CD8-positive, alpha-beta T cell (primary cell): ENCODE measurements at regions of chr10 and their contacts with region 1.

Region 1: DNA sequence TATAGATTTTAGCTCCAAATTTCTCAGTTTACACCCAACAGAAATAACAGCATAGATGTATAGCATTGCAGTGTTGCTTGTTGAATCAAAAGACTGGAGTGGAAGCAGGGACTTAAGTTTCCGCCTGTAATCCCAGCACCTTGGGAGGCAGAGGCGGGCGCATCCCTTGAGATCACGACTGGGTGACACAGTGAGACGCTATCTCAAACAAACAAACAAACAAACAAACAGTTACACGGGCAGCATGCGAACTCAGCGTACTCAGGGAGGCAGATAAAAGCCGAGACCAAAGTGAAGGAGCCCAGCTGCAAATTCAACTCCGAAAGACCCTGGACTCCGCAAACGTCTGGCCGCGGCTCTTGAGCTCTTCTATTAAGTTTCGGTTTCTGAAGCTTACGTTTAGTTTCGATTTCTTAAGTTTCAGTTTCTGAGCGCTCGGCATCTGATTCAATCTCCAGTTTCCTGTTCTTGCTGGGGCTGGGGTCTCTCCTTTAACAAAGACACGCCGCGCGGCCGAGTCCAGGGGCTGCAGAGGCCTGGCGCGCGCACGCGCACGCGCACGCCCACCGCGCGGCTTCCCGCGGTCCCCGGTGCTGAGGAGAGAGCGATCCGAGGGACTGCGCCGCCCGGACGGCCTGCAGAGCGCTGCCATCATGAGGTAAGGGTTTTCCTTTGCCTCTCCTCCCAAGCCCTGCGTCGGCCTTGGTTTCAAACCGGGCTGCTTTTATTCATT is at the start of gene IFIT5:
- DNase-seq: peak; percentile 38 to 86 (median 67)
- ATAC-seq: peak; percentile 78
- H3K4me3 ChIP-seq: peak within 1 kb of the TSS; percentile 70 to 87
- H3K4me3 Mint-ChIP-seq: peak within 1 kb of the TSS; percentile 94
- H3K27ac ChIP-seq: peak within 1 kb of the TSS; percentile 83 to 91
- H3K27ac Mint-ChIP-seq: peak within 1 kb of the TSS; percentile 98
- H3K4me1 ChIP-seq: peaks cover 47% of the 10 kb centered on the region
- H3K4me1 Mint-ChIP-seq: peaks cover 50% of the 10 kb centered on the region
- H3K27me3 ChIP-seq: no peaks in the 10 kb centered on the region
- H3K27me3 Mint-ChIP-seq: no peaks in the 10 kb centered on the region
- CTCF ChIP-seq: no peak
- total RNA-seq, gene IFIT5: 15.0 to 16.1 TPM

Region 2: GRCh38 chr10:88624840-88625239 is 789.5 kb before region 1 on chr10:
- CTCF ChIA-PET with region 1: no interaction called
- POLR2A ChIA-PET with region 1: no interaction called
- intact Hi-C with region 1: no loop called
- DNase-seq: no peak
- ATAC-seq: no peak
- H3K4me3 ChIP-seq: no peak overlapping the region
- H3K4me3 Mint-ChIP-seq: no peak overlapping the region
- H3K27ac ChIP-seq: no peak overlapping the region
- H3K27ac Mint-ChIP-seq: no peak overlapping the region
- H3K4me1 ChIP-seq: no peaks in the 10 kb centered on the region
- H3K4me1 Mint-ChIP-seq: no peaks in the 10 kb centered on the region
- H3K27me3 ChIP-seq: no peaks in the 10 kb centered on the region
- H3K27me3 Mint-ChIP-seq: peaks cover 2% of the 10 kb centered on the region
- CTCF ChIP-seq: no peak

Region 3: GRCh38 chr10:88880282-88881076 is 533.8 kb before region 1 on chr10:
- CTCF ChIA-PET with region 1: no interaction called
- POLR2A ChIA-PET with region 1: no interaction called
- intact Hi-C with region 1: loop called in 1 of 2 experiments (anchors 5 kb)
- DNase-seq: peak; percentile 43 to 86 (median 70)
- ATAC-seq: peak; percentile 69
- H3K4me3 ChIP-seq: peak overlapping the region; percentile 81 to 89
- H3K4me3 Mint-ChIP-seq: peak overlapping the region; percentile 98
- H3K27ac ChIP-seq: peak overlapping the region; percentile 76 to 79
- H3K27ac Mint-ChIP-seq: peak overlapping the region; percentile 96
- H3K4me1 ChIP-seq: peaks cover 37% of the 10 kb centered on the region
- H3K4me1 Mint-ChIP-seq: peaks cover 61% of the 10 kb centered on the region
- H3K27me3 ChIP-seq: no peaks in the 10 kb centered on the region
- H3K27me3 Mint-ChIP-seq: no peaks in the 10 kb centered on the region
- CTCF ChIP-seq: peak; percentile 17

Region 4: GRCh38 chr10:89251409-89252224 is 162.7 kb before region 1 on chr10 and contains the start of gene LIPA:
- CTCF ChIA-PET with region 1: interaction called, 3 read pairs
- POLR2A ChIA-PET with region 1: interaction called, 26 read pairs
- intact Hi-C with region 1: loop called (anchors 1 to 2 kb)
- DNase-seq: peak; percentile 93 to 99 (median 96)
- ATAC-seq: peak; percentile 96
- H3K4me3 ChIP-seq: peak within 1 kb of the TSS; percentile 82 to 84
- H3K4me3 Mint-ChIP-seq: peak within 1 kb of the TSS; percentile 90
- H3K27ac ChIP-seq: peak within 1 kb of the TSS; percentile 63 to 65
- H3K27ac Mint-ChIP-seq: peak within 1 kb of the TSS; percentile 88
- H3K4me1 ChIP-seq: peaks cover 12% of the 10 kb centered on the region
- H3K4me1 Mint-ChIP-seq: peaks cover 23% of the 10 kb centered on the region
- H3K27me3 ChIP-seq: no peaks in the 10 kb centered on the region
- H3K27me3 Mint-ChIP-seq: peaks cover 2% of the 10 kb centered on the region
- CTCF ChIP-seq: no peak
- total RNA-seq, gene LIPA: 9.7 to 12.1 TPM

Region 5: GRCh38 chr10:89332123-89332633 is 82.1 kb before region 1 on chr10:
- CTCF ChIA-PET with region 1: interaction called, 5 read pairs
- POLR2A ChIA-PET with region 1: no interaction called
- intact Hi-C with region 1: loop called in 1 of 2 experiments (anchors 1 kb)
- DNase-seq: peak in 3 of 9 experiments; percentile 36 to 85 (median 73)
- ATAC-seq: peak; percentile 44
- H3K4me3 ChIP-seq: peak overlapping the region; percentile 22 to 42
- H3K4me3 Mint-ChIP-seq: peak overlapping the region; percentile 80
- H3K27ac ChIP-seq: peak overlapping the region; percentile 28 to 70
- H3K27ac Mint-ChIP-seq: peak overlapping the region; percentile 95
- H3K4me1 ChIP-seq: peaks cover 45% of the 10 kb centered on the region
- H3K4me1 Mint-ChIP-seq: peaks cover 60% of the 10 kb centered on the region
- H3K27me3 ChIP-seq: peaks cover 0 to 7% of the 10 kb centered on the region in 2 experiments
- H3K27me3 Mint-ChIP-seq: peaks cover 12% of the 10 kb centered on the region
- CTCF ChIP-seq: no peak

Region 6: GRCh38 chr10:89351780-89352597 is 62.3 kb before region 1 on chr10:
- CTCF ChIA-PET with region 1: no interaction called
- POLR2A ChIA-PET with region 1: no interaction called
- intact Hi-C with region 1: no loop called
- DNase-seq: no peak
- ATAC-seq: no peak
- H3K4me3 ChIP-seq: no peak overlapping the region
- H3K4me3 Mint-ChIP-seq: no peak overlapping the region
- H3K27ac ChIP-seq: no peak overlapping the region
- H3K27ac Mint-ChIP-seq: no peak overlapping the region
- H3K4me1 ChIP-seq: no peaks in the 10 kb centered on the region
- H3K4me1 Mint-ChIP-seq: no peaks in the 10 kb centered on the region
- H3K27me3 ChIP-seq: no peaks in the 10 kb centered on the region
- H3K27me3 Mint-ChIP-seq: peaks cover 14% of the 10 kb centered on the region
- CTCF ChIP-seq: no peak

Region 7: GRCh38 chr10:89426230-89426868 is 12.0 kb after region 1 on chr10:
- CTCF ChIA-PET with region 1: interaction called, 12 read pairs
- POLR2A ChIA-PET with region 1: interaction called, 6 read pairs
- intact Hi-C with region 1: no loop called
- DNase-seq: peak in 2 of 9 experiments; percentile 42 to 57
- ATAC-seq: peak; percentile 49
- H3K4me3 ChIP-seq: no peak overlapping the region
- H3K4me3 Mint-ChIP-seq: no peak overlapping the region
- H3K27ac ChIP-seq: no peak overlapping the region
- H3K27ac Mint-ChIP-seq: no peak overlapping the region
- H3K4me1 ChIP-seq: no peaks in the 10 kb centered on the region
- H3K4me1 Mint-ChIP-seq: peaks cover under 1% of the 10 kb centered on the region
- H3K27me3 ChIP-seq: no peaks in the 10 kb centered on the region
- H3K27me3 Mint-ChIP-seq: peaks cover 4% of the 10 kb centered on the region
- CTCF ChIP-seq: peak; percentile 51

Region 8: GRCh38 chr10:89701238-89702120 is 287.2 kb after region 1 on chr10 and contains the start of gene KIF20B:
- CTCF ChIA-PET with region 1: no interaction called
- POLR2A ChIA-PET with region 1: interaction called, 4 read pairs
- intact Hi-C with region 1: loop called (anchors 5 kb)
- DNase-seq: peak; percentile 90 to 97 (median 94)
- ATAC-seq: peak; percentile 95
- H3K4me3 ChIP-seq: peak within 1 kb of the TSS; percentile 85 to 86
- H3K4me3 Mint-ChIP-seq: peak within 1 kb of the TSS; percentile 98
- H3K27ac ChIP-seq: peak within 1 kb of the TSS; percentile 77 to 86
- H3K27ac Mint-ChIP-seq: peak within 1 kb of the TSS; percentile 99
- H3K4me1 ChIP-seq: peaks cover 14% of the 10 kb centered on the region
- H3K4me1 Mint-ChIP-seq: peaks cover 36% of the 10 kb centered on the region
- H3K27me3 ChIP-seq: no peaks in the 10 kb centered on the region
- H3K27me3 Mint-ChIP-seq: no peaks in the 10 kb centered on the region
- CTCF ChIP-seq: peak; percentile 14
- total RNA-seq, gene KIF20B: 23.1 to 26.3 TPM